ENCODE measurements at regions of chr6 and their contacts with region 1.

Region 1: DNA sequence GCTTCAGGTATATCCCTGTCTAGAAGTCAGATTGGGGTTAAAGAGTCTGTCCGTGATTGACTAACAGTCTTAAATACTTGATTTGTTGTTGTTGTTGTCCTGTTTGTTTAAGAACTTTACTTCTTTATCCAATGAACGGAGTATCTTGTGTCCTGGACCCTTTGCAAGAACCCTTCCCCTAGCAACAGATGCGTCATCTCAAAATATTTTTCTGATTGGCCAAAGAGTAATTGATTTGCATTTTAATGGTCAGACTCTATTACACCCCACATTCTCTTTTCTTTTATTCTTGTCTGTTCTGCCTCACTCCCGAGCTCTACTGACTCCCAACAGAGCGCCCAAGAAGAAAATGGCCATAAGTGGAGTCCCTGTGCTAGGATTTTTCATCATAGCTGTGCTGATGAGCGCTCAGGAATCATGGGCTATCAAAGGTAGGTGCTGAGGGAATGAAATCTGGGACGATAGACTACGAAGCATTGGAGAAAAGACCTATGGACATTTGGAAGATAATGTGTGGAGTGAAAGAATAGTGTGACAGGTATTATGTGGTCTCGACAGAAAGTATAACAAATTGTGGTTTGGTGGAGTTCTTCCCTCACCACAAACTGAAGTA is at the start of gene HLA-DRA:
- H3K4me3 Mint-ChIP-seq: peak within 1 kb of the TSS; percentile 88
- H3K27ac Mint-ChIP-seq: peak within 1 kb of the TSS; percentile 99
- H3K4me1 Mint-ChIP-seq: peaks cover 72% of the 10 kb centered on the region
- H3K27me3 Mint-ChIP-seq: no peaks in the 10 kb centered on the region

Region 2: GRCh38 chr6:32393665-32394420 is 45.9 kb before region 1 on chr6:
- intact Hi-C with region 1: no loop called
- H3K4me3 Mint-ChIP-seq: no peak overlapping the region
- H3K27ac Mint-ChIP-seq: no peak overlapping the region
- H3K4me1 Mint-ChIP-seq: peaks cover 11% of the 10 kb centered on the region
- H3K27me3 Mint-ChIP-seq: peaks cover 31% of the 10 kb centered on the region

Region 3: DNA sequence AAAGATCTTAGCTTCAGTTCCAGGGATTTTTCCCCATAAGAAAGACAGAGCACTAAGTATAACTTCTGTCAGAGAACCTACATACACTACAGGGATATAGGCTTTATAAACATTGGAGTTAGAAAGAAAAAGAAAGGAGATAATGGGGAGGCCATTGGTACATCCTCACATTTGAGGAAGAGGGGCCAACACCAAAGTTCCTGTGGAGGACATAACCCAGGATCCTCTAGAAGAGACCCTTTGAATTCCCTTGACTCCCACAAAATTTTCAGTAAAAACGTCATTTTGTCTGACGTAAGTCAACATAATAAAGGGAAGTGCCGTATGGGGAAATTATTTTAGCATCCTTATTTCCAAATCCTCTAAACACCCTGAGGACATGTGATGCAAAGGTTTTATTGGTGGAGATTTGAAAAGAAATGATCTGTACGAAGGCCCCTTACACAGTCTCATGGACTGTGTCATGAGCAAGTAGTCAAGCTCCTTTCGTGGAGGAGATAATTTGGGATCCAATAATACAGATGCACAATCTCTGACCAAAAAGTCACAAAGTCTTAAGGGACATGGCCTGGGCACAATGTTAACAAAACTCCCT is 33.2 kb after region 1 on chr6:
- intact Hi-C with region 1: loop called (anchors 1 kb)
- H3K4me3 Mint-ChIP-seq: peak overlapping the region; percentile 67
- H3K27ac Mint-ChIP-seq: peak overlapping the region; percentile 100
- H3K4me1 Mint-ChIP-seq: peaks cover 42% of the 10 kb centered on the region
- H3K27me3 Mint-ChIP-seq: no peaks in the 10 kb centered on the region

Region 4: DNA sequence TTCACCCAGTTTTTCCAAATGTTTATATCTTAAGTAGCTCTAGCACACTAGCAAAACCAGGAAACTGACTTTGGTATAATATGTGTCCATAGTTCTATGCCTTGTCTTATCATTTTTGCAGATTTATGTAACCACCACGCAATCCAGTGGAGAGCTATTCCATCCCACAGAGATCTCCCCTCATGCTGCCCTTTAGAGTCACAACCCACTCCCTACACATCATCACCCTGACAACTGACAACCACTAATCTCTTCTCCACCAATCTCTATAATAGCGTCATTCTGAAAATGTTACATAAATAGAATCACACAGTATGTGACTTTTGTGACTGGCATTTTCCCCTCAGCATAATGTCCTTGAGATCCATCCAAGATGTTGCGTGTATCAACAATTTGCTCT is 61.3 kb after region 1 on chr6:
- intact Hi-C with region 1: no loop called
- H3K4me3 Mint-ChIP-seq: no peak overlapping the region
- H3K27ac Mint-ChIP-seq: no peak overlapping the region
- H3K4me1 Mint-ChIP-seq: no peaks in the 10 kb centered on the region
- H3K27me3 Mint-ChIP-seq: no peaks in the 10 kb centered on the region

Region 5: DNA sequence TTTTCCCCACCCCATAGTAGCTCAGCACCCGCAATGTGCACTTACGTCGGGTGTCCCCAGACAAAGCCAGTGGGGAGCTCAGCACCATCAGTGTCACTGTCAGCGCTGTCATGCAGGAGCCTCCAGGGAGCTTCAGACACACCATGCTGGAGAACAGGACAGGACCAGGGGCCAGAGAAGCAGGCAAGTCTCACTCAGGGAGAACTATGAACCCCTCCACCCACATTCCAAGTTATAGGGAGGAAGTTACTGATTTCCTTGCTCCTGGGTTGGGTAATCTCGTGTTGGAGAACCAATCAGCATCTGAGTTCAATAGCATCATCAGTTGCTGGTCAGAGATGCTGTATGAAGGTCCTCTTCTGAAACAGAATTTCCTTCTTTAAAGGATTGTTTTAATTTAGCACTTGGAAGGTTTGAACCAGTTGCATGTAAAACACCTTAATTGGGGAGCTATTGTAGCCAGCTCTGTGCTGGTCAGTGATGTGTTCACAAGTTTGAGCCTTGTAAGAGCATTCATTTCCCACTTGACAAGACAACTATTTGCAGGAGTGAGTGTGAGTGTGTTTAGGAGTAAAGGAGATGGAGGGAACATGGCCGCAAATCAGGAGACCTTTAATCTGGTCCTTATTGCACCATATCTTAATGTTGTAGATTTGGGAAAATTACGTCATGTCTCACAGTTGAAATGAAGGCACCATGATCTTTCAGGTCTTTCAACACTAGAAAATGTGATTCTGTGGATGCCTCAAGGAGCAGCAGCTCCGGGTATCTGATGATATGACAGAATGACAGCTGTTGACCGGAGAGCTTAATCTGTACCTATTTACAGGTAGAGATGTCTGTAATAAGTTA is 150.1 kb after region 1 on chr6 and contains the start of gene HLA-DRB1:
- intact Hi-C with region 1: loop called (anchors 5 kb)
- H3K4me3 Mint-ChIP-seq: peak within 1 kb of the TSS; percentile 76
- H3K27ac Mint-ChIP-seq: peak within 1 kb of the TSS; percentile 93
- H3K4me1 Mint-ChIP-seq: peaks cover 50% of the 10 kb centered on the region
- H3K27me3 Mint-ChIP-seq: no peaks in the 10 kb centered on the region

Region 6: DNA sequence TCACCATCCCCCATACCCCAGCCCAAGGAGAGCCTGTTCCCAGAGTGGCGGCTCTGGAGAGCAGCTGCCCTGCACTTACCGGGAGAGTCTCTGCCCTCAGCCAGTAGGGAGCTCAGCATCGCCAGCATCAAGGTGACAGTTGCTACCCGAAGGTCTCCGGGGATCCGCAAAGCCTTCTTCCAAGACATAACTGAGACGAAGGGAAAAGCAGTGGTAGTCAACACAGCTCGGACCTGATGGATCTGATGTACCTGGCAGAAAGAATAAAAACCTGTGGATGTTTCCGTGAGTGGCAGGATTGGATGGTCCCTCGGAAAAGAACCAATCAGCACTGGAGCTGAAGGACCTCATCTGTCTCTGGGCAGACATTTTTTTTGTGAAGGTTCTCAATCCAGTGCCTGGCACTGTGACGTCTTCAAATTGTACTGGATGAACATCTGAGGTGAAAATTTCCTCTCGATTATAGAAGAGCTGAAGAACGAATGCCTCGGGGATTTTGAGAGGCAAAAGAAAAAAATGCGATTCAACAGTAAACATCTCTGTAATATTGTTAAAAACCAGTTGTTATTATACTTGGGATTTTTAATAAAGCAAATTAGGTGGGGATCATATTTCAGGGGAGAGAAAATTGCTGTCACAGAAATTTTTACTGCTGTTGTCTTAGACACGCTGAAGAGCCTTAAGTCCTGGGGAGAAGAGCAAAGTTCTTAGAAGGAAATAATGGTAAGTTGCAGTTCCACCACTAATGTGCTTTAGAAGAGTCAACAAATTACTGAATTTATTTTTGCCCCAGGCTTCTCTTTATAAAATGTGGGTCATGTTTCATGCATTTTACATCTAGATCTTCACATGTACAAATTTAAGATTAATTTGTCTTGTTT is 227.0 kb after region 1 on chr6 and contains the start of gene HLA-DQB1:
- intact Hi-C with region 1: loop called (anchors 5 kb)
- H3K4me3 Mint-ChIP-seq: peak within 1 kb of the TSS; percentile 92
- H3K27ac Mint-ChIP-seq: peak within 1 kb of the TSS; percentile 100
- H3K4me1 Mint-ChIP-seq: peaks cover 63% of the 10 kb centered on the region
- H3K27me3 Mint-ChIP-seq: no peaks in the 10 kb centered on the region